WTC11 (cell line): ENCODE measurements at regions of chr20 and their contacts with region 1.

Region 1: GRCh38 chr20:41339507-41340326 is 904 bp upstream of the LPIN3 start:
- DNase-seq: peak; percentile 98
- ATAC-seq: peak; percentile 77
- H3K4me3 Mint-ChIP-seq: peak overlapping the region; percentile 80
- H3K27ac Mint-ChIP-seq: peak overlapping the region; percentile 92
- H3K4me1 Mint-ChIP-seq: peaks cover 6% of the 10 kb centered on the region
- H3K27me3 Mint-ChIP-seq: peaks cover 8% of the 10 kb centered on the region
- CTCF ChIP-seq: peak; percentile 99

Region 2: GRCh38 chr20:41178904-41179432 is 160.7 kb before region 1 on chr20:
- CTCF ChIA-PET with region 1: interaction called, 17 read pairs
- POLR2A ChIA-PET with region 1: no interaction called
- DNase-seq: peak; percentile 9
- ATAC-seq: peak; percentile 22
- H3K4me3 Mint-ChIP-seq: no peak overlapping the region
- H3K27ac Mint-ChIP-seq: peak overlapping the region; percentile 78
- H3K4me1 Mint-ChIP-seq: peaks cover 13% of the 10 kb centered on the region
- H3K27me3 Mint-ChIP-seq: no peaks in the 10 kb centered on the region
- CTCF ChIP-seq: no peak

Region 3: DNA sequence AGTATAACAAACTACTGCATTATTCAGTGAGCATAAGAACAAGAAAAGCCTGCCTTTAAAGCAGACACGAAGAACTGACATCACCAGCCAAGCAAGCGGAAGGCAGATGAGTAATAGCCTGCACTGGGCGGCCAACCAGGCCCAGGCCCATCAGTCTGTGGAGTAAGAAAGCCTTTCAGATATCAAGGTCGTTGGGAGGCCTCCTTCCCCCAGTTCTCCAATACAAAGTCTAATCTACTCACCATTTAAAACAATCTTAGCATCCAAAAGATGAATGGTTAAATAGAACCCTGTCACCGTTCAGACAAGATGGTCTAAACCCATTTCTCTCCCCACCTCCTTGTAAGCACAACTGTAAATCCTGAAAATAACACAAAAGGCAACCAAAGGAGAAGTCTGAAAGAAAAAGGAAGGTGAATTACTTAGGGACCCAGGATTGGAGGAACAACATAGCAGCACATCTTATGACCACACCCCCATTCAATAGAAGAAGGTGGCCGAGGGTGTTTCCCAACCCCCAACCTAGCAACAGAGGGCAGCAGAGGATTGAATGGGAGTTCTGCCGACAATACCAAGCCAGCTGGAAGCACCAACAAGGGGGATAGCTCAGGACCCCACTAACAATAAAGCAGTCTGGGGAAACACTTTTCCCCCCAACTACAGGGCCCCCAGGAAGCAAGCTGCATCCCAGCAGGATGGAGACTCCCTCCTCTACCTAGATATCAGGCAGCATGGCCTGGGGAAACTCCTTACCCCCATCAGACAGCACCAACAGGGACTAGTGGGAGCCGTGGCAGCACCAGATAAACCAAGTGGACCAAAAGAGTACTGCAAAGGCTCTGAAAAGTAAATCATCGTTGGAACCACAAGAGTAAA is 90.1 kb before region 1 on chr20:
- CTCF ChIA-PET with region 1: interaction called, 106 read pairs
- POLR2A ChIA-PET with region 1: no interaction called
- DNase-seq: peak; percentile 71
- ATAC-seq: peak; percentile 90
- H3K4me3 Mint-ChIP-seq: no peak overlapping the region; the same call in 1 of the 2 replicates
- H3K27ac Mint-ChIP-seq: peak overlapping the region; percentile 80; the same call in 1 of the 2 replicates
- H3K4me1 Mint-ChIP-seq: peaks cover 5% of the 10 kb centered on the region; the same call in 1 of the 2 replicates
- H3K27me3 Mint-ChIP-seq: peaks cover 37% of the 10 kb centered on the region
- CTCF ChIP-seq: peak; percentile 41; the same call in 1 of the 2 replicates

Region 4: DNA sequence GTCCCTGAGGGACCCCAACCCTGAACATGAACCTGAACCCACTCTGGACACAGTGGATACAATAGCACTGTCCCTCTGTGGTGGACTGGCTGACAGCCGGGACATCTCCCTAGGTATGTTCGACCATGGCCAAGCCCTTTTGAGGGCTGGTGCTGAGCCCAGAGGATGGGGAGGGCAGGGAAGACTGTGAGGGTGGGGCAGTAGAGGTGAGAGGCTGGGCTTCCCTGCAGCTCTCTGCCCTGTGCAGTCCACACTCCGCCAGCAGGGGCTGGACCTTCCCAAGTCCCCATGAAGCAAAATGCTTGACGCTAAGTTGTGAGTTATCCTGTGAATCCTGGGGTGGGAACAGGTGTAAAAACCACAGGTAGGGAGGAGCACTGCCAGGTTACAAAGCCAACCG is 12.4 kb after region 1 on chr20:
- CTCF ChIA-PET with region 1: interaction called, 13 read pairs
- POLR2A ChIA-PET with region 1: no interaction called
- DNase-seq: no peak
- ATAC-seq: peak; percentile 82
- H3K4me3 Mint-ChIP-seq: no peak overlapping the region
- H3K27ac Mint-ChIP-seq: no peak overlapping the region
- H3K4me1 Mint-ChIP-seq: peaks cover 1% of the 10 kb centered on the region
- H3K27me3 Mint-ChIP-seq: no peaks in the 10 kb centered on the region
- CTCF ChIP-seq: no peak

Region 5: GRCh38 chr20:41395667-41396664 is 56.2 kb after region 1 on chr20:
- CTCF ChIA-PET with region 1: interaction called, 13 read pairs
- POLR2A ChIA-PET with region 1: no interaction called
- DNase-seq: no peak
- ATAC-seq: peak; percentile 66
- H3K4me3 Mint-ChIP-seq: no peak overlapping the region; the same call in 1 of the 2 replicates
- H3K27ac Mint-ChIP-seq: peak overlapping the region; percentile 71; the same call in 1 of the 2 replicates
- H3K4me1 Mint-ChIP-seq: peaks cover 15% of the 10 kb centered on the region
- H3K27me3 Mint-ChIP-seq: no peaks in the 10 kb centered on the region; the same call in 1 of the 2 replicates
- CTCF ChIP-seq: no peak